Endothelial cell of umbilical vein (primary cell): ENCODE measurements at regions of chr5 and their contacts with region 1.

Region 1: DNA sequence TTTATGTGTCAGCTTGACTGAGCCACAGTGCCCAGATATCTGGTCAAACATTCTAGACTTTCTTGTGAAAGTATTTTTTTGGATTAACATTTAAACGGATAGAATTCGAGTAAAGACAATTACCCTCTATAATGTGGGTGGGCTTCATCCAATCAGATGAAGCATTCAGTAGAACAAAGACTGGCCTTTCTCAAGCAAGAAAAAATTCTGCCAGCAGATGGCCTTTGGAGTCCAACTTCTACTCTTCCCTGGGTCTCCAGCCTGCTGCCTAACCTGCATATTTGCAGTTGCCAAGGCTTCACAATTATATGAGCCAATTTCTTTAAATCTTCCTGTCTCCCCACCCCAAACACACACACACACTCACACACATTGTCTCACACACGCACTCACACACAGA is 86.4 kb downstream of the MED10 start:
- DNase-seq: peak; percentile 49
- H3K4me3 ChIP-seq: no peak overlapping the region
- H3K27ac ChIP-seq: no peak overlapping the region
- H3K4me1 ChIP-seq: no peaks in the 10 kb centered on the region
- H3K27me3 ChIP-seq: no peaks in the 10 kb centered on the region
- CTCF ChIP-seq: peak; percentile 20 to 43
- POLR2A ChIP-seq: no peak

Region 2: GRCh38 chr5:6328173-6328572 is 36.2 kb after region 1 on chr5:
- CTCF ChIA-PET with region 1: no interaction called
- POLR2A ChIA-PET with region 1: no interaction called
- dilution Hi-C with region 1: no loop called
- intact Hi-C with region 1: no loop called
- DNase-seq: peak; percentile 27
- H3K4me3 ChIP-seq: no peak overlapping the region
- H3K27ac ChIP-seq: no peak overlapping the region
- H3K4me1 ChIP-seq: no peaks in the 10 kb centered on the region
- H3K27me3 ChIP-seq: no peaks in the 10 kb centered on the region
- CTCF ChIP-seq: no peak
- POLR2A ChIP-seq: no peak

Region 3: GRCh38 chr5:6525910-6526309 is 233.9 kb after region 1 on chr5:
- CTCF ChIA-PET with region 1: no interaction called
- POLR2A ChIA-PET with region 1: no interaction called
- dilution Hi-C with region 1: no loop called
- intact Hi-C with region 1: loop called (anchors 1 kb)
- DNase-seq: peak; percentile 14
- H3K4me3 ChIP-seq: no peak overlapping the region
- H3K27ac ChIP-seq: no peak overlapping the region
- H3K4me1 ChIP-seq: no peaks in the 10 kb centered on the region
- H3K27me3 ChIP-seq: no peaks in the 10 kb centered on the region
- CTCF ChIP-seq: peak in 1 of 2 donors; percentile 42
- POLR2A ChIP-seq: no peak

Region 4: DNA sequence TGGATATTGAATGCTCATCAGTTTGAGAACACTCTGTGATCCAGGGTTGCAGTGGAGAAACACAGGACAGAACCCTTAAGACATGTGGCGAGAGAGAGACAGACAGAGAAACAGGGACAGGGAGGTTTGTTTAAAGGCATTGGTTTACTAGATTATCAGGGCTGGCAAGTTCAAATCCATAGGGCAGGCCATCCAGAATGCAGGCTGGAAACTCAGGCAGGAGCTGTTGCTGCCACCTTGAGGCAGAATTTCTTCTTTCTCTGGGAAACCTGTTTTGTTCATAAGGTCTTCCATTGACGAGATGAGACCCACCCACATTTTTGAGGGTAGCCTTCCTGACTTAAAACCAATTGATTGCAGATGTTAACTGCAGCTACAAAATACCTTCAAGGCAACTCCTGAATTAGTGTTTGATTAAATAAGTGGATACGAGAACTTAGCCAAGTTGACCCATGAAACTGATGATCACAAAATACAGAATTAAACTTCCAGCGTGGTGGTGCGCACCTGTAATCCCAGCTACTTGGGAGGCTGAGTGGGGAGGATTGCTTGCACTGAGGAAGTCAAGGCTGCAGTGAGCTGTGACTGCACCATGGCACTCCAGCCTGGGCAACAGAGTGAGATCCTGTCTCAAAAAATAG is 285.0 kb after region 1 on chr5:
- CTCF ChIA-PET with region 1: interaction called, 12 read pairs
- POLR2A ChIA-PET with region 1: no interaction called
- dilution Hi-C with region 1: no loop called
- intact Hi-C with region 1: loop called (anchors 1 kb)
- DNase-seq: peak; percentile 72
- H3K4me3 ChIP-seq: no peak overlapping the region
- H3K27ac ChIP-seq: no peak overlapping the region
- H3K4me1 ChIP-seq: peaks cover 8% of the 10 kb centered on the region
- H3K27me3 ChIP-seq: peaks cover 18% of the 10 kb centered on the region in 2 experiments
- CTCF ChIP-seq: peak; percentile 66 to 71
- POLR2A ChIP-seq: no peak